ENCODE measurements at regions of chr15 and their contacts with region 1.

Region 1: GRCh38 chr15:72599855-72600464 is 54.5 kb upstream of the GOLGA6B start:
- DNase-seq: peak; percentile 62

Region 2: GRCh38 chr15:72671535-72671934 is 71.6 kb after region 1 on chr15:
- CTCF ChIA-PET with region 1: interaction called, 22 read pairs
- POLR2A ChIA-PET with region 1: no interaction called
- DNase-seq: no peak

Region 3: GRCh38 chr15:72680931-72681330 is 81.0 kb after region 1 on chr15:
- CTCF ChIA-PET with region 1: interaction called, 10 read pairs
- POLR2A ChIA-PET with region 1: interaction called, 6 read pairs
- DNase-seq: no peak

Region 4: GRCh38 chr15:72758182-72758581 is 158.2 kb after region 1 on chr15:
- CTCF ChIA-PET with region 1: no interaction called
- POLR2A ChIA-PET with region 1: no interaction called
- DNase-seq: no peak